ENCODE measurements at regions of chr1 and their contacts with region 1.

Region 1: DNA sequence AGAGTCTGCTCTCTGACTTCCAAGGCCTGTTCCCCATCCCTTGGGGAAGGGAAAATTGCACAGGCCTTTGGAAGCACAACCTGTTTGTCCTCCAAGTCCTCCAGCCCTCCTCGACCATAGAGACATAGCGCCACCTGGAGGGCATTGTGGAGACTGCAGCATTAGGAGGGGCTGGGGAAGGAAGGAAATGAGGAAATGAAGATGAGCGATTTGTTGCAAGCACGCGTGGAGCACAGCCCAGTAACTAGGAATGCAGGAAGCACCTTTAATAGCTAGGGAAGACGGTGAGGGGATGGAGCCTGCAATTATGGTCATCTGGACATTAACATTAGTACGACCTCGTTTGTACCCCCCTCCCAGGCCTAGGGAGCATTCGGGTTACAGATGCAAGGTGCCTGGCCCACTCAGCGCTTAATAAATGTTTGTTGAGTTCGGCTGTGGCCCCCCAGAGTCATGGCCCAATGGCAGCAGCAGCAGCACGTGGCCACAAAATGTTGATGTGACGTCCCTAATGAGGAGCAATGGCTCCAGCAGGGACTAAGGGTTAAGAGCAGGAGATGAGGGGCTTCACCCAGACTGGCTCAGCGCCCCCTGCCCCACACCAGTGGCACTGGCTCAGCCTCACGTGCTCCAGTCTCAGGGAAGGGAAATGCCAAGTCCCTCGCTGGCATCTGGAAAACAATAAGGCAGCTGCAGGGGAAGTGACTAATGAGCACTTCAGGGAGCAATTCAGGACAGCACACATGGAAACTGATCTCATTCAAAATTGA is 8.0 kb upstream of the CAMK2N1 start:
- H3K4me3 ChIP-seq: no peak overlapping the region
- H3K27ac ChIP-seq: no peak overlapping the region
- H3K4me1 ChIP-seq: no peaks in the 10 kb centered on the region
- CTCF ChIP-seq: peak; percentile 95

Region 2: DNA sequence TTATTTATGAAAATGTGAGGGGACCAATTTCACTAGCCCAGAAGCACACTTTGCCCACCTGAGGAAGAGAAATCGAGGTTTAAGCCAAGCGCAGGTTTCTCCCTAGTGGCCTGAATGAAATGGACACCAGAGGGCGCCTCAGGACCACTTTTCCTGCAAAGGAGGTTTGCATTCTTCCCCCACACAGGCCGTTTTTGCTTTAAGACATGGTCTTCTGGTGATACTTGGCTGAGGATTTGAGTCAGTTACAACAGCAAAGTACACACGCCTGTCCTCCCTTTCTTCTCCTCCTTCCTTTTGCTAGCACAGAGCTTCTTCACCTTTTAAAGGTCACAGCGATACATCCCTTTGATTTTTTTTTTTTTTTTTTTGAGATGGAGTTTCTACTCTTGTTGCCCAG is 576.0 kb before region 1 on chr1:
- CTCF ChIA-PET with region 1: interaction called, 13 read pairs
- POLR2A ChIA-PET with region 1: no interaction called
- H3K4me3 ChIP-seq: no peak overlapping the region
- H3K27ac ChIP-seq: no peak overlapping the region
- H3K4me1 ChIP-seq: no peaks in the 10 kb centered on the region
- CTCF ChIP-seq: peak; percentile 84

Region 3: DNA sequence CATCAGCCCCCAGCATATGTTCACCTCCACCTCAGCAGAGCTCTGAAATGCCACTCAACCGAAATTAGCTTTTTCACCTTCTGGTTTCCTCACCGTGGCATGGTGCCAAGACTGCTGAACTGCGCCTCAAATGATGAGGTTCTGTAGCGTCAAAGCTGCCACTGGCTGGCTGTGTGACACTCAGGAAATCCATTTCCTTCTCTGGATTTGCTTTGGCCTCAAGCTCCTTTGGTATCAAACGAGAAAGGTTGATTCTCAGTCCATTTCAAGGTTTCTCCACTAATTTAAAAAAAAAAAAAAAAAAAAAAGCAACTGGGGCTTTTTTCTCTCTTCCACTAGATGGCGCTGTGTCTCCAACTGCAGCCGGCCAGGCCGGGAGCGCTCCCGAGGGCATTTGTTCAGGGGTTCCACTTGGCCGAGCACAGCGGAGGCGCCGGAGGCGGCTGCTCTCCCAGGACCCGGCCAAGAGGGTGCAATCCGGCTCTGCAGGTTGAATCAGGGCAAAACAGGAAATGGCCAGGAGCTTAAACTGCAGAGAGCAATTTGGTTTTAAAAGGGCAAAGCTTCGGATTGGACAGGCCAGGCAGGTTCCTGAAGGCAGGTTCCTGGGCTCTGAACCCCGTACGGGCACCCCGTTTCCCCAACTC is 281.2 kb before region 1 on chr1:
- CTCF ChIA-PET with region 1: interaction called, 42 read pairs
- POLR2A ChIA-PET with region 1: no interaction called
- H3K4me3 ChIP-seq: no peak overlapping the region
- H3K27ac ChIP-seq: no peak overlapping the region
- H3K4me1 ChIP-seq: no peaks in the 10 kb centered on the region
- CTCF ChIP-seq: peak; percentile 68; the same call in 1 of the 2 replicates

Region 4: DNA sequence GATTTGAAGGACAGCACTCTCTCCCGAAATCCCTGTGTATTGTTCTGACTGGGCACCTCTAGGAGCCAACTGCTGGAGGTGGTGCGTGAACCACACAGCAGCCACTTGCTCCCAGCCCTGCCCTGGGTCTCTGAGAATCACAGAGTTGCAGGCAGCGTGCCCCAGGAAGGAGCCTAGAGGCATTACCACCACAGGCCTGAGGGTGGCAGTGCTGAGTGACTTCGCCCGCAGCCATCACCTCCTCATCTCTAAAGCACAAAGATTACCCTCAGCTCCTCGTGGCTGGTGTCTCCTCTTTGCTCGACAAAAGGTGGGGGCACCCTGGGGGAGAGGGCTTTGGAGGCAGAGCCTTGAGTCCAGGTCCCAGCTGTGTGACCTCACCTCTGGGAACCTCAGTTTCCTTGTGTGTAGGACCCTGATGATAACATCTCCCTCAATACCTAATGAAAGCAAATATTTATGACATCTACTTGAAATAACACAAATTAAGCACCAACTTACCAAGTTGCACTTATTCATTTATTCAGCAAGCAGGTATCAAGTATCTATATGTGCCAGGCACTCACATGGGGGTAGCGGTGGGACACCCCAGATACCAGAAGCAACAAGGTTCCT is 117.0 kb before region 1 on chr1:
- CTCF ChIA-PET with region 1: interaction called, 17 read pairs
- POLR2A ChIA-PET with region 1: no interaction called
- H3K4me3 ChIP-seq: no peak overlapping the region
- H3K27ac ChIP-seq: no peak overlapping the region
- H3K4me1 ChIP-seq: no peaks in the 10 kb centered on the region
- CTCF ChIP-seq: peak; percentile 32; the same call in 1 of the 2 replicates

Region 5: GRCh38 chr1:20505488-20505887 is 11.5 kb after region 1 on chr1:
- CTCF ChIA-PET with region 1: interaction called, 31 read pairs
- POLR2A ChIA-PET with region 1: no interaction called
- H3K4me3 ChIP-seq: no peak overlapping the region
- H3K27ac ChIP-seq: no peak overlapping the region
- H3K4me1 ChIP-seq: no peaks in the 10 kb centered on the region; the same call in 1 of the 2 replicates
- CTCF ChIP-seq: no peak

Region 6: GRCh38 chr1:20540281-20540680 is 46.3 kb after region 1 on chr1:
- CTCF ChIA-PET with region 1: no interaction called
- POLR2A ChIA-PET with region 1: no interaction called
- H3K4me3 ChIP-seq: no peak overlapping the region
- H3K27ac ChIP-seq: no peak overlapping the region
- H3K4me1 ChIP-seq: no peaks in the 10 kb centered on the region
- CTCF ChIP-seq: no peak

Measured in HEK293 (cell line).